ENCODE measurements at regions of chr18 and their contacts with region 1.

Region 1: GRCh38 chr18:11518788-11519685 is 90.4 kb upstream of the SLC35G4 start:
- DNase-seq: peak; percentile 57
- ATAC-seq: peak; percentile 98
- H3K4me3 ChIP-seq: no peak overlapping the region
- H3K27ac ChIP-seq: no peak overlapping the region
- H3K4me1 ChIP-seq: no peaks in the 10 kb centered on the region
- H3K27me3 ChIP-seq: peaks cover 29% of the 10 kb centered on the region
- CTCF ChIP-seq: peak; percentile 73 to 98 (median 94)
- POLR2A ChIP-seq: no peak
- RAD21 ChIP-seq: peak; percentile 51

Region 2: DNA sequence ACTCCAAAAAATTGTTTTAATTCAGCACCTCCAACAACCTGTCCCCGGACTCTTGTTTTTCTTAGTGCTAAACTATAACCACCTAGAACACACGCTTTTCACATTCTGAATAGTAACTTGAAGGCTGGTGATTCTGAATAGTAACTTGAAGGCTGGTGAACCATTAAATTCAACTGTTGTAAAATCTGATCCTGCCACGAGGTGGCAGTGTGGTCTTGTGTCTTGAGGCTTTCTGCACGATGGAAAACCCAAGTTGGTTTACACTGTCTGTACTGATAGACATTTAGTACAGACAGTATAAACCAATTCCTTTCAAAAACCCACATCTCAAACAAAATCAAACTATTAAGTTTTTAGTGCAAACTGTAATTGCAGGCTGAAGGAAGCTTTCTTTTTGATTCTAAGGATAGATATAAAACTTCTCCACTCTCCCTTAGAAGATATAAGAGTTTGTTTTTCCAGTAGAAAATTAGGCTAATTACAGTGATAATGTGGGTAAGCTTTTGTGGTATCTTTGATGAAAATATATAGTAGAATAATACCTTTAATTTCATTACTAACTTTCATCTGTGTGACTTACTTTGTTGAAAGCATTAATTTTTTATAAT is 1547.6 kb before region 1 on chr18:
- CTCF ChIA-PET with region 1: no interaction called
- POLR2A ChIA-PET with region 1: no interaction called
- RAD21 ChIA-PET with region 1: no interaction called
- intact Hi-C with region 1: loop called (anchors 10 kb)
- DNase-seq: peak; percentile 60
- ATAC-seq: peak; percentile 83
- H3K4me3 ChIP-seq: no peak overlapping the region
- H3K27ac ChIP-seq: no peak overlapping the region
- H3K4me1 ChIP-seq: no peaks in the 10 kb centered on the region
- H3K27me3 ChIP-seq: no peaks in the 10 kb centered on the region
- CTCF ChIP-seq: peak; percentile 48 to 86 (median 58); a peak in 4 of 6 replicates
- POLR2A ChIP-seq: no peak
- RAD21 ChIP-seq: peak; percentile 91

Region 3: GRCh38 chr18:10851824-10852319 is 667.2 kb before region 1 on chr18:
- CTCF ChIA-PET with region 1: interaction called, 6 read pairs
- POLR2A ChIA-PET with region 1: no interaction called
- RAD21 ChIA-PET with region 1: no interaction called
- intact Hi-C with region 1: loop called (anchors 2 kb)
- DNase-seq: peak; percentile 27
- ATAC-seq: no peak
- H3K4me3 ChIP-seq: no peak overlapping the region
- H3K27ac ChIP-seq: no peak overlapping the region
- H3K4me1 ChIP-seq: no peaks in the 10 kb centered on the region
- H3K27me3 ChIP-seq: peaks cover 26% of the 10 kb centered on the region
- CTCF ChIP-seq: peak; percentile 46 to 75 (median 51); a peak in 4 of 6 replicates
- POLR2A ChIP-seq: no peak
- RAD21 ChIP-seq: peak; percentile 63

Region 4: DNA sequence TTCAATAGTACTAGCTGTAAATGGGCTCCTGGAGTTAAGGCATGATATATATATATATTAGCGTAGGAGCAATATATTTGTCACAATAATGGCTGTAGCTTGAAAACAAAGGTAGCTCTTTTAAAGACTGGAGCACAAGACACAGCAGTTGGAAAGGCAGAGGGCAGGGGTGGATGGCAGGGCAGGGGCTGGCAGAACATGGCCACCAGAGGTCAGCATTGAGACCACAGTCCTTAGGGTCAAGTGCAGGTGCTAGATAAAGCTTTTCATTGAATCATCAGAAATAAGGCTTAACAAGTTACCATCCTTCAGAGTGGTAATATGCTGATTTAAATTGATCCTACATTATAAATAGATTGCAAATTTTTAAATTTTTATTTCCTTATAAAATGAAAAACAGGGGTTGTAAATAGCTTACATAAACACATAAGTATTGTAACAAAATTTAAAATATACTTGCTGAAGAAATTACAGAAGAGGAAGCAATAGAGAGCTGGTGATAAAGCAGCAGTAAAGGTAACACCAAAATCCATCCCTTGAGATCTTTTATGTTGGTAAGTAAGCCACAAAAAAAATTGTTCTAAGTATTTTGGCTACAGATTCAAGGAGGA is 208.5 kb before region 1 on chr18:
- CTCF ChIA-PET with region 1: interaction called, 29 read pairs
- POLR2A ChIA-PET with region 1: no interaction called
- RAD21 ChIA-PET with region 1: interaction called in 1 of 2 experiments, 4 read pairs
- intact Hi-C with region 1: no loop called
- DNase-seq: peak; percentile 22
- ATAC-seq: peak; percentile 95
- H3K4me3 ChIP-seq: no peak overlapping the region
- H3K27ac ChIP-seq: no peak overlapping the region
- H3K4me1 ChIP-seq: no peaks in the 10 kb centered on the region
- H3K27me3 ChIP-seq: peaks cover 16% of the 10 kb centered on the region; the same call in 1 of the 2 replicates
- CTCF ChIP-seq: peak; percentile 50 to 91 (median 83); a peak in 5 of 6 replicates
- POLR2A ChIP-seq: no peak
- RAD21 ChIP-seq: peak; percentile 44

Region 5: GRCh38 chr18:11387880-11388279 is 131.2 kb before region 1 on chr18:
- CTCF ChIA-PET with region 1: no interaction called
- POLR2A ChIA-PET with region 1: no interaction called
- RAD21 ChIA-PET with region 1: no interaction called
- intact Hi-C with region 1: loop called (anchors 10 kb)
- DNase-seq: peak; percentile 70
- ATAC-seq: peak; percentile 88
- H3K4me3 ChIP-seq: no peak overlapping the region
- H3K27ac ChIP-seq: no peak overlapping the region
- H3K4me1 ChIP-seq: no peaks in the 10 kb centered on the region
- H3K27me3 ChIP-seq: peaks cover 45% of the 10 kb centered on the region
- CTCF ChIP-seq: peak in 2 of 3 experiments; percentile 54 to 65; a peak in 4 of 6 replicates
- POLR2A ChIP-seq: no peak
- RAD21 ChIP-seq: peak; percentile 38

Region 6: GRCh38 chr18:11553098-11553940 is 34.3 kb after region 1 on chr18:
- CTCF ChIA-PET with region 1: interaction called, 10 read pairs
- POLR2A ChIA-PET with region 1: no interaction called
- RAD21 ChIA-PET with region 1: no interaction called
- intact Hi-C with region 1: no loop called
- DNase-seq: peak; percentile 45
- ATAC-seq: peak; percentile 91
- H3K4me3 ChIP-seq: no peak overlapping the region
- H3K27ac ChIP-seq: no peak overlapping the region
- H3K4me1 ChIP-seq: no peaks in the 10 kb centered on the region
- H3K27me3 ChIP-seq: peaks cover 51% of the 10 kb centered on the region
- CTCF ChIP-seq: peak; percentile 45 to 91 (median 88); a peak in 5 of 6 replicates
- POLR2A ChIP-seq: no peak
- RAD21 ChIP-seq: peak; percentile 68

Region 7: GRCh38 chr18:11570769-11571168 is 51.7 kb after region 1 on chr18:
- CTCF ChIA-PET with region 1: no interaction called
- POLR2A ChIA-PET with region 1: no interaction called
- RAD21 ChIA-PET with region 1: no interaction called
- intact Hi-C with region 1: loop called (anchors 10 kb)
- DNase-seq: no peak
- ATAC-seq: peak; percentile 50; the same call in 1 of the 2 replicates
- H3K4me3 ChIP-seq: no peak overlapping the region
- H3K27ac ChIP-seq: no peak overlapping the region
- H3K4me1 ChIP-seq: no peaks in the 10 kb centered on the region
- H3K27me3 ChIP-seq: peaks cover 49% of the 10 kb centered on the region
- CTCF ChIP-seq: peak in 2 of 3 experiments; percentile 17 to 52; a peak in 3 of 6 replicates
- POLR2A ChIP-seq: no peak
- RAD21 ChIP-seq: peak; percentile 38